ENCODE measurements at regions of chr12 and their contacts with region 1.

Region 1: GRCh38 chr12:89179983-89180382 is 172.3 kb downstream of the DUSP6 start:
- DNase-seq: no peak
- H3K4me3 Mint-ChIP-seq: no peak overlapping the region
- H3K27ac Mint-ChIP-seq: peak overlapping the region; percentile 74
- H3K4me1 Mint-ChIP-seq: peaks cover 35% of the 10 kb centered on the region
- H3K27me3 Mint-ChIP-seq: no peaks in the 10 kb centered on the region

Region 2: GRCh38 chr12:88092771-88093170 is 1087.2 kb before region 1 on chr12:
- CTCF ChIA-PET with region 1: no interaction called
- POLR2A ChIA-PET with region 1: no interaction called
- intact Hi-C with region 1: no loop called
- DNase-seq: no peak
- H3K4me3 Mint-ChIP-seq: no peak overlapping the region
- H3K27ac Mint-ChIP-seq: no peak overlapping the region
- H3K4me1 Mint-ChIP-seq: no peaks in the 10 kb centered on the region
- H3K27me3 Mint-ChIP-seq: no peaks in the 10 kb centered on the region

Region 3: GRCh38 chr12:89135976-89136634 is 43.9 kb before region 1 on chr12:
- CTCF ChIA-PET with region 1: no interaction called
- POLR2A ChIA-PET with region 1: interaction called, 5 read pairs
- intact Hi-C with region 1: loop called (anchors 1 kb)
- DNase-seq: no peak
- H3K4me3 Mint-ChIP-seq: no peak overlapping the region
- H3K27ac Mint-ChIP-seq: no peak overlapping the region
- H3K4me1 Mint-ChIP-seq: peaks cover 31% of the 10 kb centered on the region
- H3K27me3 Mint-ChIP-seq: no peaks in the 10 kb centered on the region

Region 4: DNA sequence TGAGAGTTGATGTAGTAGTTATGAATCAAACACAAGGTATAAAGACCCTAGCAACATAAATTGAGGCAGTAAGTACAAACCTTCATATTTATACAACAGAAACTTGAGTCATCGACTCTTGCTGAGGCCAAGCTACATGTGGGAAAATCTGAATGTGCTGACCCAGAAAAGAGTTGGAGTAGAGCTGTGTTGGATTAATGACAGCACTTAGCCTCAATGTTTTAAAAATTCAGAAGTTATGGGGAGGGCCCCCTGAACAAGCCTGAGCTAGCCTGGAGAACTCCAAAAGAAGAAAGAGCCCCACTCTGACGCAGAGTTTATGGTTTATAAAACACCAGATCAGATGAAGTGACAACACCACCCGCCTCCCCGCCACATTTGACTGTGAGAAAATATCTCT is 72.3 kb after region 1 on chr12:
- CTCF ChIA-PET with region 1: interaction called, 3 read pairs
- POLR2A ChIA-PET with region 1: no interaction called
- intact Hi-C with region 1: loop called (anchors 2 kb)
- DNase-seq: peak; percentile 21
- H3K4me3 Mint-ChIP-seq: no peak overlapping the region
- H3K27ac Mint-ChIP-seq: peak overlapping the region; percentile 81
- H3K4me1 Mint-ChIP-seq: peaks cover 34% of the 10 kb centered on the region
- H3K27me3 Mint-ChIP-seq: no peaks in the 10 kb centered on the region

Region 5: GRCh38 chr12:89345830-89346740 is 166.1 kb after region 1 on chr12:
- CTCF ChIA-PET with region 1: no interaction called
- POLR2A ChIA-PET with region 1: interaction called, 20 read pairs
- intact Hi-C with region 1: no loop called
- DNase-seq: peak; percentile 65
- H3K4me3 Mint-ChIP-seq: peak overlapping the region; percentile 57
- H3K27ac Mint-ChIP-seq: peak overlapping the region; percentile 76
- H3K4me1 Mint-ChIP-seq: peaks cover 56% of the 10 kb centered on the region
- H3K27me3 Mint-ChIP-seq: peaks cover 2% of the 10 kb centered on the region